ACHN (cell line): ENCODE measurements at regions of chr2 and their contacts with region 1.

Region 1: DNA sequence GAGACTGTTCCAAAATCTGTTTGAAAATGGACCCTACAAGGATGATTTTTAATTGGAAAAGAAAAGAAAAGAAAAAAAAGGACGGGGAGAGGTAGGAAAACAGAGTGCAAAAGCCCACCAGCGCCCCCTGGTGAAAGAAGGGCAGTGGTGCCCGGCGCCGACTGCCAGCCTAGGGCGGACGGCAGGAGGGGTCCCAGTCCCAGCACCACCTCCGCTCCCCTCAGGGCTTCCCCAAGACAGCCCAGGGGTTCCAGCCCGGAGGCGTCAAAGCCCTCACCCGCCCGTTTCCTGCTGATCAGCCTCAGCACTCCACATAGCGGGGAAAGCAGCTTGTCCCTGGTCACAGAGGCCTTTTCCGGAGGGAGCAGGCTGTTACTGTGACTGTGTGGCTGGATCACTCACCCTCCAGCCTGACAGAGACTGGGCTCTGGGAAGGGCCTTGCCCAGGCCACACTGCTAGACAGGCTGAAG is 213.9 kb downstream of the TFCP2L1 start:
- DNase-seq: peak; percentile 61

Region 2: DNA sequence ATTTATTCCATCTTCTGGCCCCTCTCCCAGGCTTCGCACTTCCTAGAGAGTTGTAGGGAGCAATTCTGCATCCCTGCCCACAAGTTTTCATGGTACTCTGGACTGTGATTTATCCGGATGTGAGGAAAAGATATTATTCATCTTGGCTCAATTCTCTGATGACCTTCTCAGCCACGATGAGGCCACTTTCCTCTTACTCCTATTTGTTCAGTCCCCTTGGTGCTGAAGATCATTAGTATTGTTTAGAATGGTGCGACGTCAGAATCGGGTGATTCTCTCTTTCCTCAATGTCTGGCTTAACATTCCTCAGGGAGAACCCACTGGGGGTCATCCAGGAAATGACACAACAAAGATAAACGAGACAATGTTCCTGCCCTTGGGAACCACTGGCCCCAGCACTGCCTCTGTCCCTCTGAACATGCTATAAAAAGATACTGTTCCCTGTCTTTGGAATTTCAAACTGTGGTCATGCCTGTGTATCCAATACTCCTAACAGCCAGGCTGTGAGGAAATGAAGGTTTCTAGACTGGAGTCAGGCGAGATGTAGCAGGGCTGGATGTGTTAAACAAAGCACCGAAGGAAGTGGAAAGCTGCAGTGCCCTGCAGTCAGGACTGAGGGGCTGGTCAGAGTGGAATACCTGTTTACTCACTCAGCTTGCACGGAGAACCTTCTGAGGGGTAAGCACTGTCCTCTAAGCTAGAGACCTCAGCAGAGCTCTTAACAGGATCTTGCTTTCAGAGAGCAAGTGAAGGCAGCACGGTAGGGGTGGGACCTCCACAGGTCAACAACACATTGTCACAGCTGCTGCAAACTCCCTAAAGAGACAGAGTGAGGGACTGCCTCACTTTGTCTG is 348.3 kb before region 1 on chr2:
- in situ Hi-C with region 1: loop called (anchors 25 kb)
- DNase-seq: no peak

Region 3: GRCh38 chr2:121377646-121378045 is 306.6 kb after region 1 on chr2:
- in situ Hi-C with region 1: no loop called
- DNase-seq: no peak

Region 4: DNA sequence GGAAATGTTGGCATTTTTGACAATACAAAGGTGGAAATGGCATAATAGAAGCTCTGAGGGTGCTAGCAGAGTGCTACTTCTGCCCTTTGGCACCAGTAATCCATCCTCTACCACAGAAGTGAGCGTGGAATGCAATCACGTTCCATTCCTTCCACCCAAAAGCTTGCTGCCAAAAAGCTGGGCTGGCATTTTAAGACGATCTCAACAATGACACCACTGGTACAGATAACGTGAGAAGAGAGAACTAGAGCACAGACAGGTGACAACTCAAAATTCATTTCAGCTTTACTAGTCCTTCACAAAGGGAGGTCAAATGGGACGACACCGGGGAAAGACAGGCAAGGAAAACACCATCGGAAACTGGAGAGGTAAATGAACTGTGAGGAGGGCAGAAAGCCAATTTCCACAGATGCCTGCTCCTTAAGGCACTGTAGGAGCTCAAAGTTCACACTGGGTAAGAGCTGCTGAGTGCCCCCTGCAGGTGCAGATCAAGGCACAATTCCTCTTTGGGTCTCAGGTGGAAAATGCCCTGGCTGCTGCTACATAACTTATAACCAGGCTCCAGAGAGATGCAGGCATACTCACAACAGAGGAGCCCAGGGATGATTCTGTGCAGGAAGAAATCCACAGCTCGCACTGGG is 408.9 kb after region 1 on chr2:
- in situ Hi-C with region 1: no loop called
- DNase-seq: peak; percentile 88